Posterior vena cava (tissue), 2 donors: ENCODE measurements at regions of chr5 and their contacts with region 1.

Region 1: GRCh38 chr5:170420780-170421412 is 31.7 kb upstream of the KCNMB1 start:
- DNase-seq: no peak

Region 2: GRCh38 chr5:170225326-170226128 is 195.4 kb before region 1 on chr5:
- intact Hi-C with region 1: loop called (anchors 5 to 10 kb)
- DNase-seq: peak; percentile 84

Region 3: GRCh38 chr5:170232786-170233185 is 188.1 kb before region 1 on chr5 and contains the start of gene C5orf58:
- intact Hi-C with region 1: loop called (anchors 5 to 10 kb)
- DNase-seq: peak; percentile 78
- total RNA-seq, gene C5orf58: not detected

Region 4: GRCh38 chr5:170267431-170268152 is 153.3 kb before region 1 on chr5:
- intact Hi-C with region 1: loop called (anchors 10 kb)
- DNase-seq: peak; percentile 92

Region 5: DNA sequence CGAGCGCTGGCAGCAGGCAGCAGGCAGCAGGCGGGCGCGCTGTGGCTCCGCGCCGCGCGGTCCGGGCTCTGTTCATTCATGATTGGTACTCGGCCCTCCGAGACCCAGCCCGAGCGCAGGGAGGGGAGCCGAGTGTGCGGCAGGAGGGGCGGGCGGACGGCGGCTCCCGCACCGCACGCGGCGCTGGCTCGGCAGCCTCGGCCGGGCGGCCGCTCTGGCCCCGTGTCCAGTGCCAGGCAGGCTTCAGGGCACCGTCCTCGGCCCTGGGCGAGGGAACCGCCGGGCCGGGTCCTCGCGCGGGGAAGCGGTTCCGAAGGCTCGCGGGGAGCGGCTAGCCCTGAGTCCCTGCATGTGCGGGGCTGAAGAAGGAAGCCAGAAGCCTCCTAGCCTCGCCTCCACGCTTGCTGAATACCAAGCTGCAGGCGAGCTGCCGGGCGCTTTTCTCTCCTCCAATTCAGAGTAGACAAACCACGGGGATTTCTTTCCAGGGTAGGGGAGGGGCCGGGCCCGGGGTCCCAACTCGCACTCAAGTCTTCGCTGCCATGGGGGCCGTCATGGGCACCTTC is 83.2 kb after region 1 on chr5:
- intact Hi-C with region 1: no loop called
- DNase-seq: no peak

Region 6: GRCh38 chr5:170584450-170585058 is 163.7 kb after region 1 on chr5:
- intact Hi-C with region 1: no loop called
- DNase-seq: no peak

Region 7: DNA sequence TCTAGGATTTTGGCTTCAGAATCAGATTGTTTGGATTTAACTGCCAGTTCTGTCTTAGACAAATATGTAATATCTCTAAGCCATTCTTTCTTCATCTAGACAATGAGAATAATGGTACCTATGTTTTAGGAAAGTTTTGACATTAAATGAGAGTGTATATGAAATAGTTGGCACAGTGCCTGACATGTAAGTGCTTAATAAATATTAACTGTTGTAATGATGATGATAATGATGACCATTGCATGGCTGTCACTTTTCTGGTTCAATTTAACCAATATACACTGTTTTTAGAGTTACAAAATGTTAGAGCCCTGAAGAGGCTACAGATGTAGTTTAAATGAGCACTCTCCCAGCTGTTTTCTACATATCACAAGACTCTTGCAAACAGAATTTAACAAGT is 572.6 kb after region 1 on chr5:
- intact Hi-C with region 1: no loop called
- DNase-seq: no peak